MCF 10A (cell line): ENCODE measurements at regions of chr14 and their contacts with region 1.

Region 1: GRCh38 chr14:74109369-74109768 is 24.6 kb downstream of the LIN52 start:
- DNase-seq: no peak
- H3K4me3 Mint-ChIP-seq: no peak overlapping the region
- H3K27ac Mint-ChIP-seq: no peak overlapping the region
- H3K4me1 Mint-ChIP-seq: no peaks in the 10 kb centered on the region
- H3K27me3 Mint-ChIP-seq: no peaks in the 10 kb centered on the region
- CTCF ChIP-seq: no peak

Region 2: GRCh38 chr14:74140374-74140850 is 31.0 kb after region 1 on chr14:
- CTCF ChIA-PET with region 1: interaction called, 11 read pairs
- POLR2A ChIA-PET with region 1: no interaction called
- intact Hi-C with region 1: no loop called
- DNase-seq: no peak
- H3K4me3 Mint-ChIP-seq: no peak overlapping the region
- H3K27ac Mint-ChIP-seq: no peak overlapping the region
- H3K4me1 Mint-ChIP-seq: no peaks in the 10 kb centered on the region
- H3K27me3 Mint-ChIP-seq: no peaks in the 10 kb centered on the region
- CTCF ChIP-seq: no peak

Region 3: DNA sequence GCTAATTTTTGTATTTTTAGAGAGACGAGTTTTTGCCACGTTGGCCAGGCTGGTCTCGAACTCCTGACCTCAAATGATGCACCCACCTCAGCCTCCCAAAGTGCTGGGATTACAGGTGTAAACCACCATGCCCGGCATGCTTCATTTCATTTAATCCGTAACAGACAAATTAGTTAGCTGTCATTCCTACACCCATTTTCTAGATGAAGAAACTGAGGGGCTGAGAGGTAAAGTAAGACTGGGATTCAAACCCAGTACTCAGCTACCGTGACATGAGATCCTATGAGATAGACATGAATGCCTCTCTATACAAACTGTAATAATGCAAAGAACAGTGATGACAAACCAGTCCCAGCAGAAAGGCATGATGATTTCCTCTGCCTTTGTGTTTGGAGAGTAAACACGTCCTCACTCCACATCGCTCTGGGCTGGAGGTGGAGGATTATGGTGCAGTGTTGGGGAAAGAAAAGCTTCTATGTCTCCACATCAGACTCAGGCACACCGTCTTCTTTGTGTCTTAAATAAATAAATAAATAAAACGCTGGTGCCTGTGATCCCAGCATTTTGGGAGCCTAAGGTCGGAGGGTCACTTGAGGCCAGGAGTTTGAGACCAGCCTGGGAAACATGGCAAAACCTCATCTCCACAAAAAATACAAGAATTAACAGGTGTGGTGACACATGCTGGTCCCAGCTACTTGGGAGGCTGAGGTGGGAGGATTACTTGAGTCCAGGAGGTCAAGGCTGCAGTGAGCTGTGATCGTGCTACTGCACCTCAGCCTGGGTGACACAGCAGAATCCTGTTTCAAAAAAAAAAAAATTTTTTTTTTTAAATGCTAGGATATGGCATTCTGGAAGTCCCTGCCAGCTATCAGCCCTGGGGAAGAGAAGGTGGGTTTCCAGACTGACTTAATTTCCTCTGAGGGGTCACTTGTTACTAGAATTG is 140.3 kb after region 1 on chr14:
- CTCF ChIA-PET with region 1: interaction called, 55 read pairs
- POLR2A ChIA-PET with region 1: no interaction called
- intact Hi-C with region 1: loop called (anchors 1 kb)
- DNase-seq: no peak
- H3K4me3 Mint-ChIP-seq: no peak overlapping the region
- H3K27ac Mint-ChIP-seq: no peak overlapping the region
- H3K4me1 Mint-ChIP-seq: peaks cover 6% of the 10 kb centered on the region
- H3K27me3 Mint-ChIP-seq: peaks cover 8% of the 10 kb centered on the region
- CTCF ChIP-seq: no peak

Region 4: DNA sequence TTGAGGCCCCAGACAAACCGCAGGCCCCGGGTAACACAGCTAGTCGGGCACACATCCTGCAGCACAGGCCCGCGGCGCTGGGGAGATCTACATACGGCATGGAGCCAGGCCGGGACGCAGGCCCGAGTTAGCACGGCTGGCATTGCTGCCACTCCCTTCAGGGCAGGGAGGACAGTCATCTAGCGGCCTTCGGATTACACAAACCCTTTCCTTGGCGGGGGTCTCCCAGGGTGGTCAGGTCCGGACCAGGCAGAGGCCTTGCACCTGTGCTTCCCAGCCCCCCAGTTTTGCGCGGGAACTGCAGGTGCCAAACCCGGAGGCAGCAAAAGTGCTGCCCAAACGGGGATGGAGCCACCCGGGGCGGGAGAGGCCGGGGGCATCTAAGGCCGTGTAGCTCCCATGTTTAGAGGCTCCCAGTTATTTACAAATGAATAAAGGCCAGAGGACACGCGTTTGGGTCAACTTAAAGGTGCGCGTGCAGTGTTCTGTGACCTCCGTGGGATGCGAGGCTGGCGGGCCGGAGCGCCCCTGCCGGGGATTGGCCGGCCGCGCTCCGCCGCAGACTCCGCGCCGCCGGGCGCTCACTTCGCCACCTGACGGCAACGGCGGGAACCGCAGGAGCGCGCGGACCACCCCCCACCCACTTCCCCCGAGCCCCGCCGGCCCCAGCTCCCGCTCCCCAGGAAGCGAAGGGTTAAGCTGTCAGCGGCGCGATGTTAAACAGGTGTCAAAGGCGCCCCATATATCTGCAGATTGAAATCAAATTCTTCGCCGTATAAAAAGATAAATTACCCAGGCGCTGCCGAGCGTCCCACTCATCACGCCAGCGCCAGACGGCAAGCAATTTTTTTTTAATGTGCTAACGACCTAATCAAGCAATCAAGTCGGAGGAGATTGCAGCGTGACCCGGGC is 148.0 kb after region 1 on chr14:
- CTCF ChIA-PET with region 1: interaction called, 55 read pairs
- POLR2A ChIA-PET with region 1: no interaction called
- intact Hi-C with region 1: loop called (anchors 1 kb)
- DNase-seq: peak; percentile 31
- H3K4me3 Mint-ChIP-seq: peak overlapping the region; percentile 61
- H3K27ac Mint-ChIP-seq: no peak overlapping the region
- H3K4me1 Mint-ChIP-seq: peaks cover 10% of the 10 kb centered on the region
- H3K27me3 Mint-ChIP-seq: no peaks in the 10 kb centered on the region
- CTCF ChIP-seq: peak; percentile 96